ENCODE measurements at regions of chr1 and their contacts with region 1.

Region 1: GRCh38 chr1:204989266-204990058 is 53.5 kb upstream of the CNTN2 start:
- DNase-seq: peak; percentile 63 to 80 (median 79)
- ATAC-seq: peak; percentile 60 to 71
- H3K4me3 ChIP-seq: no peak overlapping the region
- H3K27ac ChIP-seq: no peak overlapping the region
- H3K4me1 ChIP-seq: no peaks in the 10 kb centered on the region
- H3K27me3 ChIP-seq: no peaks in the 10 kb centered on the region

Region 2: GRCh38 chr1:204885288-204885711 is 104.2 kb before region 1 on chr1:
- intact Hi-C with region 1: no loop called
- DNase-seq: peak in 2 of 3 donors; percentile 68 to 84
- ATAC-seq: peak; percentile 60 to 64
- H3K4me3 ChIP-seq: no peak overlapping the region
- H3K27ac ChIP-seq: peak overlapping the region; percentile 72
- H3K4me1 ChIP-seq: peaks cover 17% of the 10 kb centered on the region
- H3K27me3 ChIP-seq: no peaks in the 10 kb centered on the region

Region 3: DNA sequence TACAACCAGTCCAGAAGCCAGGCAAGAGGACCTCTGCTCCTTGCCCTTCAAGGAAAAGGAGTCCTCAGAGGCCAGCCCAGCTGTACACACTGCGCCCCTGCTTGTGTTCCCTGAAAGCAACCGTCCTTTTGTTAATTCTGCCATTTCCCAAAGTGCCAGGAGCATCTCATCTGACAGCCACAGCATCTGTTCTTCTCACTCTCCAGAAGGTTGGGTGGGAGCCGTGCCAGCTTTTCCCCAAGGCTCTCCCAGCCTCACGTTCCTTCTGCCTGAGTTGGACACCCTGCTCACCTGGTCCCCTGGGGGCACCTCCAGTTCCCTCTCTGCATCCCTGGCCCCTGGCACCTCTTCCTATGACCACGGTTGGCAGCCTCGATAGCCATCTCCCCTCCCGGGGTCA is 43.0 kb after region 1 on chr1:
- intact Hi-C with region 1: no loop called
- DNase-seq: no peak
- ATAC-seq: no peak
- H3K4me3 ChIP-seq: no peak overlapping the region
- H3K27ac ChIP-seq: no peak overlapping the region
- H3K4me1 ChIP-seq: no peaks in the 10 kb centered on the region
- H3K27me3 ChIP-seq: no peaks in the 10 kb centered on the region

Region 4: GRCh38 chr1:205056188-205056611 is 66.7 kb after region 1 on chr1:
- intact Hi-C with region 1: loop called (anchors 5 to 10 kb)
- DNase-seq: no peak
- ATAC-seq: no peak
- H3K4me3 ChIP-seq: no peak overlapping the region
- H3K27ac ChIP-seq: no peak overlapping the region
- H3K4me1 ChIP-seq: no peaks in the 10 kb centered on the region
- H3K27me3 ChIP-seq: no peaks in the 10 kb centered on the region

Region 5: DNA sequence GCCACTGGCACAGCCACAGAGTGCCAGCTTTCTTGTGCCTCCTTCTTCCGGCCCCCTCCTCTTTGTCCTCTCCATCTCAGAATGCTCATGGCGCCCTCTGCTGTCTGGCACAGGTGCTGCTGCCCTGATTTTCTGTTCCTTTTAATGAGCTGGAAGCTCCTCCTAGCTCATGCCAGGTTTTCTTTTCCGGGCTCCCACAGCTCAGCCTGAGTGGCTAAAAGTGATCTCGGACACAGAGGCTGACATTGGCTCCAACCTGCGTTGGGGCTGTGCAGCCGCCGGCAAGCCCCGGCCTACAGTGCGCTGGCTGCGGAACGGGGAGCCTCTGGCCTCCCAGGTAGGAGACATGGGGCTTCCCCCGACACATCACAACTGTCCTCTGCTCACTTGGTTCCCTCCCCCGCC is 72.2 kb after region 1 on chr1:
- intact Hi-C with region 1: loop called (anchors 5 to 10 kb)
- DNase-seq: peak; percentile 61 to 89 (median 88)
- ATAC-seq: peak; percentile 52 to 64
- H3K4me3 ChIP-seq: no peak overlapping the region
- H3K27ac ChIP-seq: no peak overlapping the region
- H3K4me1 ChIP-seq: no peaks in the 10 kb centered on the region
- H3K27me3 ChIP-seq: no peaks in the 10 kb centered on the region

Region 6: DNA sequence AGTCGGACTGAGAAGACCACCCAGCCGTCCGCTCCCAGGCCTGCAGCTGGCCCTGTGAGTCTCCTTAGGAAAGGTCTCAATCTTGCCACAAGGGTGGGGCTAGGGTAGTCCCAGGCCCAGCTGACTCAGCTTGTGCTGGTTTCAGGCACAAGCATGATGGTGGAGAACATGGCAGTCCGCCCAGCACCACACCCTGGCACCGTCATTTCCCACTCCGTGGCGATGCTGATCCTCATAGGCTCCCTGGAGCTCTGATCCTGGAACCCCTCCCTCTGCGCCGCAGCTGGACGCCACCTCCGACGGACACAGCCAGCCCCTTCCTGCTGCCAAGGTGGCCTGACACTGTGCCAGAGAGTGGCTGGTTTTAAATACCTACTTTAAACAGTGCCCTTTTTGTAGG is 84.0 kb after region 1 on chr1:
- intact Hi-C with region 1: no loop called
- DNase-seq: no peak
- ATAC-seq: no peak
- H3K4me3 ChIP-seq: no peak overlapping the region
- H3K27ac ChIP-seq: no peak overlapping the region
- H3K4me1 ChIP-seq: peaks cover 2% of the 10 kb centered on the region
- H3K27me3 ChIP-seq: no peaks in the 10 kb centered on the region

Measured in right cardiac atrium (tissue), 5 donors.